ENCODE measurements at regions of chr17 and their contacts with region 1.

Region 1: GRCh38 chr17:41801374-41802271 is 10.1 kb downstream of the P3H4 start:
- DNase-seq: peak; percentile 70 to 87
- ATAC-seq: peak; percentile 75 to 95 (median 91)
- H3K4me3 ChIP-seq: no peak overlapping the region
- H3K4me3 Mint-ChIP-seq: no peak overlapping the region
- H3K27ac ChIP-seq: no peak overlapping the region
- H3K27ac Mint-ChIP-seq: no peak overlapping the region
- H3K4me1 ChIP-seq: peaks cover 8% of the 10 kb centered on the region
- H3K4me1 Mint-ChIP-seq: peaks cover 0 to 7% of the 10 kb centered on the region in 2 donors
- H3K27me3 ChIP-seq: no peaks in the 10 kb centered on the region
- H3K27me3 Mint-ChIP-seq: peaks cover 0 to 2% of the 10 kb centered on the region in 2 donors
- CTCF ChIP-seq: peak; percentile 96

Region 2: DNA sequence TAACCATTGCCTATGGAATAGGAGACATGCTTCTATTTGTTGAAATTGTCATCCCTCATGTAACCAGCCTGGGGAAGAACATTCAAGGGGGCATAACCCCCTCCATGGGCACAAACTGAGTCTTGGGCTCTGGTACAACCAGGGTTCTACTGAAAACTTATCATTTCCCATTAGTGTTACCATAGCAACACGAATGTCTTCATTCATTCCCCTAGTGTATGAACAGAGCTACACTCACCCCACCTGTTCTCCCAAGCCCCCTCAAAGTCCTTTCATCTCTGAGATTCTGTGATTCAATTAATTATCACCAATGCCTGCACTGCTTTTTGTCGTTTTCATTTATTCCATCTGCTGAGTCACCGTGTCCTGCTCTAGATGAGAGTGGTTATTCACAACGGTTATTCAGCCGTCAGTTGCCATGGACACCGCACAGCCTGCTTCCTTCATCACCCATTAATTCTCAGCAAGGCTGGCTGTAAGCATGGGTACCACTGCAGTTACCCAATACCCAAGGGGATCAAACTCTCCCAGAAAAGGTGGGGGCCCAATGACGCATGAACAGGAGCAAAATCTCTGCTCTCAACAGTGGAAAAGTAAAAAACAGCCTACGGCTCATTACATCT is 91.0 kb before region 1 on chr17:
- intact Hi-C with region 1: no loop called
- DNase-seq: no peak
- ATAC-seq: no peak
- H3K4me3 ChIP-seq: no peak overlapping the region
- H3K4me3 Mint-ChIP-seq: no peak overlapping the region
- H3K27ac ChIP-seq: no peak overlapping the region
- H3K27ac Mint-ChIP-seq: no peak overlapping the region
- H3K4me1 ChIP-seq: no peaks in the 10 kb centered on the region
- H3K4me1 Mint-ChIP-seq: no peaks in the 10 kb centered on the region
- H3K27me3 ChIP-seq: no peaks in the 10 kb centered on the region
- H3K27me3 Mint-ChIP-seq: peaks cover 8 to 20% of the 10 kb centered on the region in 2 donors
- CTCF ChIP-seq: no peak

Region 3: DNA sequence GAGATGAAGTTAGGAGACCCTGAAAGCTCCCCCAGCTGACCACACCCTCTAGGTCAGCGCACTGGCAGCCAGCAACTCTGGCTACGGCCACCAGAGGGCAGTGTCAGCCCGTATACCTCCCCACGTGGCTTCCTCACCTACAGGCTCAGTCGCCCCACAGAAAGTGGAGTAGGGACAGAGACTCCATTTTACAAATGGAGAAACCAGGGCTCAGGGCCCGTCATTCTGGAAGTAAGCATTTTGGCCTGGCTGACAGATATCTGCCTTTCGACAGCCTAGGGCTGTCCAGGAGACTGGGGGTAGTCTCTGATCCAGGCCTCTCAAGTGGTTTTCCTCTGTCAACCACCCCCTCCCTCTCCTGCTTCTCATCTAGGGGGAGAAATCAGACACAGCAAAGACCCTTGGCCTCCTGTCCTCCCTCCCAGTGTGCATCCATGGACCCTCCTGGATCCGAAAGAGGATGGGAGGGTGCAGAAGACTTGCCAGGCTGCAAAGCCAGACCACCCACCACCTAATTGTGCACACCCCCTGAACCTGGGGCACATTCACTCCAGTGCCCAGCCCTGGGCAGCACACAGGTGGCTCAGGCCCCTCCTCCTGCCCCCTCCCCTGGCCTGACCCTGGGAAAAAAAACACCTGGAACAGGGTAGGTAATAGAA is 63.4 kb before region 1 on chr17:
- intact Hi-C with region 1: loop called (anchors 1 kb)
- DNase-seq: peak; percentile 77 to 91
- ATAC-seq: peak; percentile 89 to 99 (median 98)
- H3K4me3 ChIP-seq: no peak overlapping the region
- H3K4me3 Mint-ChIP-seq: no peak overlapping the region
- H3K27ac ChIP-seq: no peak overlapping the region
- H3K27ac Mint-ChIP-seq: no peak overlapping the region
- H3K4me1 ChIP-seq: peaks cover 16% of the 10 kb centered on the region
- H3K4me1 Mint-ChIP-seq: no peaks in the 10 kb centered on the region
- H3K27me3 ChIP-seq: peaks cover 26% of the 10 kb centered on the region
- H3K27me3 Mint-ChIP-seq: peaks cover 20 to 27% of the 10 kb centered on the region in 2 donors
- CTCF ChIP-seq: peak; percentile 98

Region 4: DNA sequence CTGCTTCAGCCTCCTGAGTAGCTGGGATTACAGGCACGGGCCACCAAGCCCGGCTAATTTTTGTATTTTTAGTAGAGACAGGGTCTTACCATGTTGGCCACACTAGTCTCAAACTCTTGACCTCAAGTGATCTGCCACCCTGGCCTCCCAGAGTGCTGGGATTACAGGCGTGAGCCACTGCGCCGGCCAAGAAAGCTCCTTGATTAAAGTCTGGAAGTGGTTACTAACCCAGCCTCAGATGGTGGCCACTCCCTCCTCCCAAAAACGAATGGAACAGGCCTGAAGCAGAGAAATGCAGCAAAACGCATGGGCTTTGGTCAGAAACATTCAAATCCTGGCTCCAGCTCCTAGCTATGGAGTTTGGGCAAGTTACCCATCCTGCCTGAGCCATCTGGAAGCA is 22.5 kb after region 1 on chr17:
- intact Hi-C with region 1: no loop called
- DNase-seq: no peak
- ATAC-seq: no peak
- H3K4me3 ChIP-seq: no peak overlapping the region
- H3K4me3 Mint-ChIP-seq: no peak overlapping the region
- H3K27ac ChIP-seq: no peak overlapping the region
- H3K27ac Mint-ChIP-seq: no peak overlapping the region
- H3K4me1 ChIP-seq: no peaks in the 10 kb centered on the region
- H3K4me1 Mint-ChIP-seq: no peaks in the 10 kb centered on the region
- H3K27me3 ChIP-seq: no peaks in the 10 kb centered on the region
- H3K27me3 Mint-ChIP-seq: no peaks in the 10 kb centered on the region
- CTCF ChIP-seq: no peak

Region 5: DNA sequence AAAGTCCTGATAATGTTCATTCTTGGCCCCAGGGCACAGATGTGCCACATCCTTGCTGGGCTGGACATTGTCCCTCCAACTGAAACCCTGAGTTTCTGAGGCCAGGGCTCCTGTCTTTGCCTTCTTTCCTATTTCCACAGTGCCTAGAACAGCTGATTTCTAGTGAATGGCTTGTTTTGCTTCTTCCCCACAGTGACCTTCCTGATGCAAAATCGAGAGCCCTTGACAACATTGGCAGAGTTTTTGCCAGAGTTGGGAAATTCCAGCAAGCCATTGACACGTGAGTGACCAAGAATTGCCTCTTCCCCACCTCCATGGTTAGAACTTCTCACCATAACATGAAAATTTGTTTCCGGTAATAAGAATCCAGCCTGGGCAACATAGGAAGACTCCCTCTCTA is 143.3 kb after region 1 on chr17:
- intact Hi-C with region 1: no loop called
- DNase-seq: no peak
- ATAC-seq: no peak
- H3K4me3 ChIP-seq: no peak overlapping the region
- H3K4me3 Mint-ChIP-seq: no peak overlapping the region
- H3K27ac ChIP-seq: no peak overlapping the region
- H3K27ac Mint-ChIP-seq: no peak overlapping the region
- H3K4me1 ChIP-seq: no peaks in the 10 kb centered on the region
- H3K4me1 Mint-ChIP-seq: no peaks in the 10 kb centered on the region
- H3K27me3 ChIP-seq: no peaks in the 10 kb centered on the region
- H3K27me3 Mint-ChIP-seq: peaks cover 4 to 7% of the 10 kb centered on the region in 2 donors
- CTCF ChIP-seq: no peak

Region 6: DNA sequence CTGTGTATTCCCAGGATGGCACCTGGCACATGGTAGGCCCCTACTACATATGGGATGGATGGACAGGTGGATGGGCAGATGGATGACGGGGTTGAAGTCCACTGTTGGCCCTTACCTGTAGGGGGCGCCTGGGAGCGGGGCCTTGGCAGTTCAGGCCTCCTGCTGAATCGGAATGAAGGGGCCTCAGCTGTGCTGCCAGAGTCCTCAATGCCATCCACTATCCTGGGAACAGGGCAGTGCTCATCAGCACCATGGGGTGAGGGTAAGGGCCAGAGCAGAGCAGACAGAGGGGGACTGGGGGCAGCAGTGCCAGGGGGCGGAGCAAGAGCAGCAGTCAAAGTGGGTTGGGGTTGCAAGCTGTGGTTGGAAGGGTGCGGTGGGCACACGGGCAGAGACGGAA is 361.5 kb after region 1 on chr17:
- intact Hi-C with region 1: no loop called
- DNase-seq: peak in 1 of 2 donors; percentile 47
- ATAC-seq: peak in 1 of 3 donors; percentile 44
- H3K4me3 ChIP-seq: no peak overlapping the region
- H3K4me3 Mint-ChIP-seq: no peak overlapping the region
- H3K27ac ChIP-seq: no peak overlapping the region
- H3K27ac Mint-ChIP-seq: no peak overlapping the region
- H3K4me1 ChIP-seq: peaks cover 8% of the 10 kb centered on the region
- H3K4me1 Mint-ChIP-seq: peaks cover 0 to 4% of the 10 kb centered on the region in 2 donors
- H3K27me3 ChIP-seq: no peaks in the 10 kb centered on the region
- H3K27me3 Mint-ChIP-seq: peaks cover 0 to 3% of the 10 kb centered on the region in 2 donors
- CTCF ChIP-seq: peak; percentile 8

Measured in natural killer cell (primary cell).